ENCODE measurements at regions of chr2 and their contacts with region 1.

Region 1: DNA sequence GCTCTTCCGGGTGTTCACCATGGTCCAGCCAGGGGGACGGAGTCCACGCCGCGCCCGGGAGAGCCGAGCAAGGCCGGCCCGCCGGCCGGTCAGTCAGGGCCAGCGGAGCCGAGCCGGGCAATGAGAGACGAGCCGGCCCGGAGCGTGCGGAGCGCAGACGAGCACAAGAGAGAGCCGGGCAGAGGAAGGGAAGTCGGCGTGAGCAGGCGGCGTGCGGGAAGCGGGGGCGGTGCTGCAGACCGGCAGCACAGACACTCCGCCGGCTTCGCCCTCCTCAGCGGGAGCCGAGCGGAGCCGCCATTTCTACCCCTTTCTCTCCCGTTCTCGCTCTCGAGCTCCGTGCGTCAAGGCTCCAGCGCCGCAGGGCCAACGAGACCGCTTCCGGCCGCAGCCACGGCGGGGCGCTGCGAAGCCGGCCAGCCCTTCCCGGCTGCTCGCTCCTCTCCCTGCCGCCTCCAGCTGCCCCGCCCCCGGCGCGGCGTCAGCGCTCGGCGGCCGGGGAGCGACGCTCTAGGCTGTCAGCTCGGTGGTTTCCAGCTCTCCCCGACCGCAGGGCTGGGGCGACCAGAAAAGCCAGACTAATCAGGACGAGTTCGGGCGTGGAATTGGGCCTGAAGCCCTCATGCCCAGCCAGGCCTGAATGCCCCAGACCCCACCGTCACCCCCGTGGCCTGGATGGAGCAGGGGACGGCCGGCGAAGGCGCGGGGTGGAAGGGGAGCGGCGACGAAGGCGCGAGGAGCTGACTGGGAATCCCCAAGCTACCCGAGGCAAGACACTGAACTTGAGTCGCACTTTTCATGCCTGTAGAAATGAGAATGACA is at the start of gene ATAD2B:
- DNase-seq: peak; percentile 95
- H3K4me3 Mint-ChIP-seq: peak within 1 kb of the TSS; percentile 99
- H3K27ac Mint-ChIP-seq: peak within 1 kb of the TSS; percentile 100
- H3K4me1 Mint-ChIP-seq: peaks cover 47% of the 10 kb centered on the region
- H3K27me3 Mint-ChIP-seq: peaks cover 3% of the 10 kb centered on the region

Region 2: DNA sequence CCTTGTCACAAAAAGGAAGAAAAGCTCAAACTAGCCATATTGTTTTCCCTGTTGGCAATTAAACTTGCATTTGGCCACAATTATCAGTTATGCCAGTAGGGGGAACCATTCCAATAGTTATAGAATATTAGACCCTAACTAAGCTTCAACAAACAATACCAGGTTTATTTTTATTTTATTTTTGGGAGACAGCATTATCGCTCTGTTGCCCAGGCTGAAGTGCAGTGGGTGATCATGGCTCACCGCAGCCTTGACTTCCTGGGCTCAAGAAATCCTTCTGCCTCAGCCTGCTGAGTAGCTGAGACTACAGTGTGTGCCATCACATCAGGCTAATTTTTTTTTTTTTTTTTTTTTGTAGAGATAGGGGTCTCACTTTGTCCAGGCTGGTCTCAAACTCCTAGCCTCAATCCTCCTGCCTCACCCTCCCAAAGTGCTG is 102.2 kb before region 1 on chr2:
- CTCF ChIA-PET with region 1: interaction called, 45 read pairs
- DNase-seq: peak; percentile 22
- H3K4me3 Mint-ChIP-seq: no peak overlapping the region
- H3K27ac Mint-ChIP-seq: no peak overlapping the region
- H3K4me1 Mint-ChIP-seq: no peaks in the 10 kb centered on the region
- H3K27me3 Mint-ChIP-seq: no peaks in the 10 kb centered on the region

Region 3: GRCh38 chr2:23939987-23940717 is 13.2 kb after region 1 on chr2 and contains the start of gene UBXN2A:
- CTCF ChIA-PET with region 1: interaction called, 29 read pairs
- DNase-seq: peak; percentile 76
- H3K4me3 Mint-ChIP-seq: peak within 1 kb of the TSS; percentile 92
- H3K27ac Mint-ChIP-seq: peak within 1 kb of the TSS; percentile 92
- H3K4me1 Mint-ChIP-seq: peaks cover 27% of the 10 kb centered on the region
- H3K27me3 Mint-ChIP-seq: peaks cover 27% of the 10 kb centered on the region

Region 4: DNA sequence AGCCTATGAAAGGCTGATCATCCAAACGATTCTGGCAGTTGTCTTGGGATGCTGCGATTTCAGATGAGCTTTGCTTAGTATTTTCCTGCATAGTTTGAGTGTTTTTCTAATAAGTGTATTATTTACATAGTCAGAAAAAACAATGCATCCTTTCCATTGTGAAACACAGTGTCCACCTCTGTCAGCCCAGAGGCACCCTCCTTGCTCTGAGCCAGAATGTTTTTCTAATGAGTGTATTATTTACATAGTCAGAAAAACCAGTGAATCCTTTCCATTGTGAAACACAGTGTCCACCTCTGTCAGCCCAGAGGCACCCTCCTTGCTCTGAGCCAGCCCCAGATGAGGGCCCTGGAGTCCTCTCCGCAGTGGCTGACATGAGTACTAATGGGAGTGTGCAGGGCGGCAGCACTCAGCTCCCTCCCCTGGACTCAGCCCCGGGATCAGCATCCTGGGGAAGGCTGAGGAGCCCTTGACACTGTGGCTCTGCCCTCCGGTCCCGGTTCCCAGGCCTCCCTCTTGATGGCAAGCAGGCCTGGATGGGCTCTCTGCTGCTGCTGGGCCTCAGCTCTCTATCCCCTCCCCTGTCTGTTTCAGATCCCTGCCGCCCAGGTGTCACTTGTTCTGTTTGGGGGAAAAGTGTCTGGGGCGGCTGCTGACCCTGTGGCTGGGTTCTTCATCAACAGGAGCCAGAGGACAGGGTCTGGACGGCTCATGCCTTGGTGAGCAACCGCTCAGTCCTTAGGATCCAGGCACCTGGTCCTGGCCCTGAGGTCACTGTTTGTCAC is 88.8 kb after region 1 on chr2:
- CTCF ChIA-PET with region 1: no interaction called
- DNase-seq: no peak
- H3K4me3 Mint-ChIP-seq: no peak overlapping the region
- H3K27ac Mint-ChIP-seq: no peak overlapping the region
- H3K4me1 Mint-ChIP-seq: no peaks in the 10 kb centered on the region
- H3K27me3 Mint-ChIP-seq: peaks cover 29% of the 10 kb centered on the region

Region 5: GRCh38 chr2:24084386-24085361 is 157.7 kb after region 1 on chr2 and contains the start of gene TP53I3:
- CTCF ChIA-PET with region 1: interaction called, 37 read pairs
- DNase-seq: peak; percentile 84
- H3K4me3 Mint-ChIP-seq: peak within 1 kb of the TSS; percentile 90
- H3K27ac Mint-ChIP-seq: peak within 1 kb of the TSS; percentile 93
- H3K4me1 Mint-ChIP-seq: peaks cover 16% of the 10 kb centered on the region
- H3K27me3 Mint-ChIP-seq: no peaks in the 10 kb centered on the region

Region 6: GRCh38 chr2:24164125-24164973 is 237.4 kb after region 1 on chr2:
- CTCF ChIA-PET with region 1: interaction called, 10 read pairs
- DNase-seq: peak; percentile 62
- H3K4me3 Mint-ChIP-seq: no peak overlapping the region
- H3K27ac Mint-ChIP-seq: no peak overlapping the region
- H3K4me1 Mint-ChIP-seq: no peaks in the 10 kb centered on the region
- H3K27me3 Mint-ChIP-seq: peaks cover 19% of the 10 kb centered on the region

Measured in activated naive CD4-positive, alpha-beta T cell treated with anti-CD3 and anti-CD28 coated beads, Interleukin-2, amount 10 ng/mL, durations not matched to agents 7 days and 5 days (primary cell).